Sigmoid colon (tissue), 7 donors: ENCODE measurements at regions of chr12 and their contacts with region 1.

Region 1: GRCh38 chr12:10153271-10154144 is 18.4 kb downstream of the OLR1 start:
- DNase-seq: peak; percentile 88
- H3K4me3 ChIP-seq: peak overlapping the region; percentile 22 to 60 (median 50)
- H3K27ac ChIP-seq: peak overlapping the region; percentile 77 to 88 (median 82)
- H3K4me1 ChIP-seq: peaks cover 0 to 14% (median 10%) of the 10 kb centered on the region in 4 donors
- H3K27me3 ChIP-seq: no peaks in the 10 kb centered on the region
- CTCF ChIP-seq: peak; percentile 54 to 83 (median 74)
- EP300 ChIP-seq: no peak
- POLR2A ChIP-seq: no peak

Region 2: DNA sequence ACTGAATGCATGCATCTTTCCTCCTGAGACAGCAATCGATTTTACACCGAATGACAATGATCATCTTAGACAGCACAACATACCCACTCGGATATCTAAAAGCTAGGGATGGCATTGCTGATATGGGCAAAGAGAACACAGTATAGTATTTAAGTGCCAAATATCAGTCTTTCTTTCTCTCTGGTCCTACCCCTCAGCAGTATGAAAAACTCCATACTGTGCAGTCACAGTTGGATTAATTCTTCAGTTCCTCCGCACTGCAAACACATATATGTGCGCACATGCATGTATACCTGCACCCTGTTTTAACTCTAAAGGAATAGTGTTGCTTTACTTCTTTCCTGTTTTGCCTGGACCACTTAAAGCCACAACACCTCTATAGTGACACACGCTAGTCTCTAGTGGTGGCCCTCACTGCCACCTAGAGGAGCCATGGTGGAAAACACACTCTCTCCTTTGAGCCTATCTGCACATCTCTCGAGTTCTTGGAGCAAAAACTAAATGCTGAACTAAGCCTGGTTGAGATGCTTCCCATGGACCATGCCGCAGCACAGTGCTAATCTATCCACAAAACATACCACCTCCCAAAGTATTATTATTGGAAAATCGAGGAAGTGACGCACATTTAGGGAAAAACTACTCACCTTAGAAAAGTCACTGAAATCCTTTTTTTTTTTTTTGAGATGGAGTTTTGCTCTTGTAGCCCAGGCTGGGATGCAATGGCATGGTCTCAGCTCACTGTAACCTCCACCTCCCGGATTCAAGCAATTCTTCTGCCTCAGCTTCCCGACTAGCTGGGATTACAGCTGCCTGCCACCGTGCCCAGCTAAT is 37.3 kb after region 1 on chr12:
- intact Hi-C with region 1: loop called (anchors 1 kb)
- DNase-seq: peak; percentile 79
- H3K4me3 ChIP-seq: no peak overlapping the region
- H3K27ac ChIP-seq: peak overlapping the region in 2 of 4 donors; percentile 57 to 60
- H3K4me1 ChIP-seq: peaks cover 0 to 24% (median 5%) of the 10 kb centered on the region in 4 donors
- H3K27me3 ChIP-seq: no peaks in the 10 kb centered on the region
- CTCF ChIP-seq: peak; percentile 19 to 76 (median 62)
- EP300 ChIP-seq: no peak
- POLR2A ChIP-seq: no peak

Region 3: GRCh38 chr12:10268037-10268436 is 114.5 kb after region 1 on chr12:
- intact Hi-C with region 1: no loop called
- DNase-seq: no peak
- H3K4me3 ChIP-seq: no peak overlapping the region
- H3K27ac ChIP-seq: no peak overlapping the region
- H3K4me1 ChIP-seq: no peaks in the 10 kb centered on the region
- H3K27me3 ChIP-seq: no peaks in the 10 kb centered on the region
- CTCF ChIP-seq: no peak
- EP300 ChIP-seq: no peak
- POLR2A ChIP-seq: no peak